ENCODE measurements at regions of chr19 and their contacts with region 1.

Region 1: GRCh38 chr19:43809762-43810696 is 7.8 kb upstream of the LYPD5 start:
- DNase-seq: no peak
- ATAC-seq: peak; percentile 49
- H3K4me3 Mint-ChIP-seq: no peak overlapping the region
- H3K27ac Mint-ChIP-seq: no peak overlapping the region
- H3K4me1 Mint-ChIP-seq: no peaks in the 10 kb centered on the region
- H3K27me3 Mint-ChIP-seq: peaks cover 14% of the 10 kb centered on the region
- CTCF ChIP-seq: no peak

Region 2: DNA sequence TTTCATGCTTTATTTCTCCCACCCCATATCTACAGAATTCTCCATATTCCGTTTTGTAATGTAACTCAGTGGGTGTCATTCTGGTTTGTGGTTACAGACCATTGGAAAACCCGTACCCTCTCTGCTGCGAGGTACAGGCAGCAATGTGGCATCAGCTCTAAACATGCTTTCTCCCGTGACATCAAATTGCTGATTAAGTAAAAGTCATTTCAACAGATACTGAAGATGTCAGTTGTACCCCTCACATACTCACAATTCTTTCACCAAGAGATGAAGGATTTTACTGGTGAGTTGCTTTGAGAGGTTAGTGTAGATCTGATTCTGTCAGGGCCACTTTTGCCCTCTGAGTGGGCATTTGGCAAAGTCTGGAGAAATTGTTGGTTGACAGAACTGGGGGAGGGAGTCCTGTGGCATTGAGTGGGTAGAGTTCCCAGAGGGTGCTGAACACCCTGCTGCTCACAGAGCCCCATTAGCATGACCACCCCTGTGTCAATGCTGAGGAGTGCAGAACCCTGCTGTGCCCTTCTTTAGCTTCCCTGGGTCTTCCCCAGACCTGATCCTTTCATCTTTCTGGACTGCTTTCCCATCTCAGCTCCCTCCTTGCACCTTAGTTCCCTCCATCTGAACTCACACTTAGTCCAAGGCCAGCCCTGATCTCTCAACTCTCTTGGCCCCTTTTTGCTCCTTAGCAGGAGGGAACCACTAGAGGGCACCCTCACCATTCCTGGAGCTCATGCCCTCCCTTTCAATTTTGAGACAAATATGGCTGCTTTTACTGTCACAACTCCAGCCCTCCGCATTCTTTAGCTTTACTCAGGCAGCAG is 1175.4 kb before region 1 on chr19:
- CTCF ChIA-PET with region 1: no interaction called
- POLR2A ChIA-PET with region 1: no interaction called
- intact Hi-C with region 1: no loop called
- DNase-seq: no peak
- ATAC-seq: no peak
- H3K4me3 Mint-ChIP-seq: no peak overlapping the region
- H3K27ac Mint-ChIP-seq: no peak overlapping the region
- H3K4me1 Mint-ChIP-seq: no peaks in the 10 kb centered on the region
- H3K27me3 Mint-ChIP-seq: peaks cover 22% of the 10 kb centered on the region
- CTCF ChIP-seq: no peak

Region 3: GRCh38 chr19:43305658-43306057 is 504.4 kb before region 1 on chr19:
- CTCF ChIA-PET with region 1: no interaction called
- POLR2A ChIA-PET with region 1: no interaction called
- intact Hi-C with region 1: no loop called
- DNase-seq: no peak
- ATAC-seq: no peak
- H3K4me3 Mint-ChIP-seq: no peak overlapping the region
- H3K27ac Mint-ChIP-seq: no peak overlapping the region
- H3K4me1 Mint-ChIP-seq: no peaks in the 10 kb centered on the region
- H3K27me3 Mint-ChIP-seq: peaks cover 4% of the 10 kb centered on the region
- CTCF ChIP-seq: no peak

Region 4: GRCh38 chr19:43433358-43433673 is 376.7 kb before region 1 on chr19:
- CTCF ChIA-PET with region 1: interaction called, 4 read pairs
- POLR2A ChIA-PET with region 1: no interaction called
- intact Hi-C with region 1: loop called (anchors 1 kb)
- DNase-seq: no peak
- ATAC-seq: no peak
- H3K4me3 Mint-ChIP-seq: no peak overlapping the region
- H3K27ac Mint-ChIP-seq: no peak overlapping the region
- H3K4me1 Mint-ChIP-seq: peaks cover 33% of the 10 kb centered on the region
- H3K27me3 Mint-ChIP-seq: no peaks in the 10 kb centered on the region
- CTCF ChIP-seq: no peak

Region 5: GRCh38 chr19:43723588-43723987 is 86.4 kb before region 1 on chr19:
- CTCF ChIA-PET with region 1: no interaction called
- POLR2A ChIA-PET with region 1: no interaction called
- intact Hi-C with region 1: no loop called
- DNase-seq: no peak
- ATAC-seq: no peak
- H3K4me3 Mint-ChIP-seq: no peak overlapping the region
- H3K27ac Mint-ChIP-seq: no peak overlapping the region
- H3K4me1 Mint-ChIP-seq: peaks cover 40% of the 10 kb centered on the region
- H3K27me3 Mint-ChIP-seq: no peaks in the 10 kb centered on the region
- CTCF ChIP-seq: no peak

Region 6: DNA sequence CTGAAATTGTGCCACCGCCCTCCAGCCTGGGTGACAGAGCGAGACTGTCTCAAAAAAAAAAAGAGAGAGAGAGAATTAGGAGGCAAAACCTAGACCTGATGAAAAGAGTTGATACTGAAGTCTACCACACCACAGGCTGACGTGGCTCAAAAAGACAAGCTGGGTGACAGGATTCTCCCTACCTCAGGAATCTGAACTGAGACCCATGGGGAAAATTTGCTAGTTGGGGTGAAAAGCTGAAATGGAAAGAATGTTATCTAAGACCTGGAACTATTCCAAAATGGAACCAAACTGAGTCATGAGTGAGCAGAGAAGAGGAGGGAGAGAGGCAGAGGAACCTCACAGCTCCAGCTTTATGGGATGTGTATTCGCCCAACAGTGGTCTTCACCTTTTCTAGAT is 67.0 kb before region 1 on chr19:
- CTCF ChIA-PET with region 1: interaction called, 44 read pairs
- POLR2A ChIA-PET with region 1: interaction called, 4 read pairs
- intact Hi-C with region 1: loop called (anchors 1 kb)
- DNase-seq: no peak
- ATAC-seq: no peak
- H3K4me3 Mint-ChIP-seq: no peak overlapping the region
- H3K27ac Mint-ChIP-seq: no peak overlapping the region
- H3K4me1 Mint-ChIP-seq: peaks cover 22% of the 10 kb centered on the region
- H3K27me3 Mint-ChIP-seq: no peaks in the 10 kb centered on the region
- CTCF ChIP-seq: no peak

Region 7: GRCh38 chr19:43983912-43984686 is 174.1 kb after region 1 on chr19 and contains the start of gene ZNF155:
- CTCF ChIA-PET with region 1: no interaction called
- POLR2A ChIA-PET with region 1: no interaction called
- intact Hi-C with region 1: no loop called
- DNase-seq: peak; percentile 57
- ATAC-seq: peak; percentile 91
- H3K4me3 Mint-ChIP-seq: peak within 1 kb of the TSS; percentile 95
- H3K27ac Mint-ChIP-seq: peak within 1 kb of the TSS; percentile 86
- H3K4me1 Mint-ChIP-seq: peaks cover 10% of the 10 kb centered on the region
- H3K27me3 Mint-ChIP-seq: no peaks in the 10 kb centered on the region
- CTCF ChIP-seq: no peak
- total RNA-seq, gene ZNF155: 7.0 and 9.4 TPM in 2 replicates